ENCODE measurements at regions of chr2 and their contacts with region 1.

Region 1: DNA sequence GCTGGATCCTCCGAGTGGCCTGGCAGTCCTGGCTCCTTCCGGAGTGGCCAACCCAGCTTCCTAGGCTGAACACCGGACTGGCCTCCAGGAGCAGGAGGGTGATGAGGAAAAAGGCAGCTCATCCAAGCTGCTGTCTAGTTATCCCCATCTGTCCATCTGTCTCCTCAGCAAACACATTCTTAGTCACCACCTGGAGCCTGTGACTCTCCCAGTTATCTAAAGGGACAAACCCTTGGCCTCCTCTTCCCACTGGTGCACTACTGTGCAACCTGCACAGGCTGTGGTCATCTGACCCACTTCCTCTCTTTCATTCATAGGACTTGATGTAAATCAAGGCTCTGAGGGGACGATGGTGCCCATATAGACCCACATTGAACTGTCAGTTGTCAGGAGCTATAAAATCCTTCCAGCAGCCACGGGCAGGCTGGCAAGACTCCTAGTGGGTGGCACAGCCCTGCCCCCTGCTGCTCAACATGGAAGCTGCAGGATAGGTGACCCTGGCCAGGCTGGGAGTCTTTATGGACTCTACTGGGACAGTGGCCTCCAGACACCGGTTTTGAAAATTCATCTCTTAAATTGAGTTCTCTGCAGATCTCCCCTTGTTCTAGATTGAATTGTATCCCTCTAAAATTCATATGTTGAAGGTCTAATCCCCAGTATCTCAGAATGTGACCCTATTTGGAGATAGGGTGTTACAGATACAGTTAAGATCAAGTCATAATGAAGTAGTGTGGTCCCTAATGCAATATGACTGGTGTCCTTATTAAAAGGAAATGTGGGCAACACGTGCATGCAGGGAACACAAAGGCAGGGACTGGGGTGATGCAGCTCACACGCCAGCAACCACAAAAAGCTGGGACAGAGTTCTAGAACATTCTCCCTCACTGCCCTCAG is 29.3 kb upstream of the DUSP2 start:
- DNase-seq: peak; percentile 18
- H3K4me3 ChIP-seq: no peak overlapping the region
- H3K27ac ChIP-seq: no peak overlapping the region
- H3K27me3 ChIP-seq: no peaks in the 10 kb centered on the region
- CTCF ChIP-seq: peak; percentile 94

Region 2: GRCh38 chr2:96024336-96025193 is 149.9 kb before region 1 on chr2:
- CTCF ChIA-PET with region 1: interaction called, 34 read pairs
- POLR2A ChIA-PET with region 1: no interaction called
- DNase-seq: no peak
- H3K4me3 ChIP-seq: no peak overlapping the region
- H3K27ac ChIP-seq: no peak overlapping the region
- H3K27me3 ChIP-seq: no peaks in the 10 kb centered on the region
- CTCF ChIP-seq: no peak

Region 3: DNA sequence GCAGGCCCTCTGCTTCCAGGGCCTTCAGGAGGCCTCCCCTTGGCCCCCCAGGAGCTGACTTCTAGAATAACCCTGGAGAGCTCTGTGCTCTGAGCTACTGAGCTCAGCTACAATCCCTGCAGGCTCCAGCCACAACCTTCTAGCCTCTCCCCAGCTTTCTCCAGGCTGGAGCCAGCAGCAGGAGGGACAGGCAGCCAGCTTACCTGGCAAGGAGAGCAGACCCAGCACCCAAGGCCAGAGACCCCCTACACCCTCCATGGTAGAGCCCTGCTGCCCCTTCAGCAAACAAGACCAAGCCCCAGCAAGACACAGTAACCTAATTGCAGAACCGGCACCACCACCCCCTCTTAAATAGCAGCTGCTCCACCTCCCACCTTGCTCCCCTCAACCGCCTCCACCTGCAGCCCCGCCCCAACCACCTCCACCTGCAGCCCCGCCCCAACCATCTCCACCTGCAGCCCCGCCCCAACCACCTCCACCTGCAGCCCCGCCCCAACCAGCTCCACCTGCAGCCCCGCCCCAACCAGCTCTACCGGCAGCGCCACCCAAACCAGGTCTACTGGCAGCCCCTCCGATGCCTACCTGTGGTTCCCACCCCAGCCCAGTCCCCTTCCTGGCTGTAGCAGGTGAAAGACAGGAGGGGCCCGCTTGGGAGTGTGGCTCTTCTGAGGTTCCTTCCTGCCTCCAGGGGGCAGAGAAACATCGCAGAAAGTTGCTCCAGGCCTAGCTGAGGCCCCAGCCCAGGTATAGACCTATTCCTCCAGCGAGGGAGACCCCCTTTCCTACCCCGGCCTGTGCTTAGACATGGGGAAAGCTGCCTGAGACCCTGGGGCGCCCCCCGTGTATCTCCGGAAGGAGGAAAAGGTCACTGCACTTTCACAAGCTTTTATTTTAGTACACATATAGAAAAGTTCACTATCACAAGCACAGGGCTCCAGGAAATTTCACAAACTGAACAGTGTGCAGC is 36.0 kb before region 1 on chr2 and contains the start of gene ASTL:
- CTCF ChIA-PET with region 1: interaction called, 54 read pairs
- POLR2A ChIA-PET with region 1: no interaction called
- DNase-seq: no peak
- H3K4me3 ChIP-seq: no peak within 1 kb of the TSS
- H3K27ac ChIP-seq: no peak within 1 kb of the TSS
- H3K27me3 ChIP-seq: peaks cover 17% of the 10 kb centered on the region
- CTCF ChIP-seq: peak; percentile 73
- polyA plus RNA-seq, gene ASTL: not detected in 2 replicates

Region 4: DNA sequence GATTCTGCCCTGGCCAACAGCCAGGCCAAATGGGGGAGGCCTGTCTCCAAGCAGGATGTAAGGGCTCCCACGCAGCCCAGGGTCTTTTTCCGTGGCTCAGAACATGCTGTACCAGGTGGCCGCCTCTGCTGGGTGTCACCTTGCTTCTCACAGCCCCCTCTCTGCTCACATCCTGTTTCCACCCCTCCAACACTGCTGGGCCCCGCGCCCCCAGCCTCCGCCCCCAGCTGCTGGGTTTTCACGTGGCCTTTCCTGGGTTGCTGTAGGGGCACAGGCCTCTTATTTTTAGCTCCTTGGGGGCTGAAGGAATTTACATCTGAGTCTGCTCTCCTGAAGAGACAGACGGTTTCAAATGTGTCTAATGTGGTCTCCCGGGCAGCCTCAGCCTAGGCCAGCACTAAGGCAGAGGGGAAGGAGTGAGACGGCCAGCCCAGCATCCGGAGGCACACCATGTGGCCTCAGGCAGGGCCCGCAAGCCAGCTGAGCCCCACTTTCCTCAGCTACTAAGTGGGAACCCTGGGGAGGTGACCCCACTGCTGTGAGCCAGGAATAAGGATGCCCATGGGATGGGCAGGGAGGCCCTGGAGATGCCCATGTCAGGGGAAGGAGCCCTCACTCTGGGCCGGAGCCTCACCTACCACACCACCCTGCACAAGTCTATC is 10.6 kb before region 1 on chr2:
- CTCF ChIA-PET with region 1: interaction called, 20 read pairs
- POLR2A ChIA-PET with region 1: no interaction called
- DNase-seq: no peak
- H3K4me3 ChIP-seq: no peak overlapping the region
- H3K27ac ChIP-seq: no peak overlapping the region
- H3K27me3 ChIP-seq: peaks cover 7% of the 10 kb centered on the region
- CTCF ChIP-seq: no peak

Region 5: DNA sequence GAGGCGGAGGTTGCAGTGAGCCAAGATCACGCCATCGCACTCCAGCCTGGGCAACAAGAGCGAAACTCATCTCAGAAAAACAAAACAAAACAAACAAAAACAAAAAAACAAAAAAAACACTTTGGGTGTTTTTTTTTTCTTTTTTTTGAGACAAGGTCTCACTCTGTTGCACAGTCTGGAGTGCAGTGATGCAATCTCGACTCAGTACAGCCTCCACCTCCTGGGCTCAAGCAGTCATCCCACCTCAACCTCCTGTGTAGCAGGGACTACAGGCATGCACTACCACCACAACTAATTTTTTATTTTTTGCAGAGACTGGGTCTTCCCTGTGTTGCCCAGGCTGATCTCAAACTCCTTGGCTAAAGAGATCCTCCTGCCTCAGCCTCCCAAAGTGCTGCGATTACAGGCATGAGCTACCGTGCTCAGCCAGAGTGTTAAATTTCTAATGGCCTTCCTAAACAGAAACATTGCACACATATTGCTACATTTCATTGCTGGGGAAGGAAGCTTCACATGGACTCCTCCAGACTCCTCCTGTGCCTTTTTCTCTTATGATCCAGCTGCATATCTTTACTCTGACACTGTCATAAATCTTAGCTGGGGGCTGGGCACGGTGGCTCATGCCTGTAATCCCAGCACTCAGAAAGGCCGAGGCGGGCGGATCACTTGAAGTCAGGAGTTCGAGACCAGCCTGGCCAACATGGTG is 14.5 kb after region 1 on chr2:
- CTCF ChIA-PET with region 1: interaction called, 27 read pairs
- POLR2A ChIA-PET with region 1: no interaction called
- DNase-seq: no peak
- H3K4me3 ChIP-seq: no peak overlapping the region
- H3K27ac ChIP-seq: no peak overlapping the region
- H3K27me3 ChIP-seq: no peaks in the 10 kb centered on the region
- CTCF ChIP-seq: no peak

Region 6: GRCh38 chr2:96195410-96196066 is 21.0 kb after region 1 on chr2:
- CTCF ChIA-PET with region 1: interaction called, 17 read pairs
- POLR2A ChIA-PET with region 1: no interaction called
- DNase-seq: peak; percentile 73
- H3K4me3 ChIP-seq: no peak overlapping the region
- H3K27ac ChIP-seq: peak overlapping the region; percentile 63
- H3K27me3 ChIP-seq: no peaks in the 10 kb centered on the region
- CTCF ChIP-seq: no peak

Region 7: GRCh38 chr2:96202152-96202854 is 27.8 kb after region 1 on chr2:
- CTCF ChIA-PET with region 1: interaction called, 17 read pairs
- POLR2A ChIA-PET with region 1: no interaction called
- DNase-seq: no peak
- H3K4me3 ChIP-seq: no peak overlapping the region
- H3K27ac ChIP-seq: no peak overlapping the region
- H3K27me3 ChIP-seq: no peaks in the 10 kb centered on the region
- CTCF ChIP-seq: no peak

Region 8: DNA sequence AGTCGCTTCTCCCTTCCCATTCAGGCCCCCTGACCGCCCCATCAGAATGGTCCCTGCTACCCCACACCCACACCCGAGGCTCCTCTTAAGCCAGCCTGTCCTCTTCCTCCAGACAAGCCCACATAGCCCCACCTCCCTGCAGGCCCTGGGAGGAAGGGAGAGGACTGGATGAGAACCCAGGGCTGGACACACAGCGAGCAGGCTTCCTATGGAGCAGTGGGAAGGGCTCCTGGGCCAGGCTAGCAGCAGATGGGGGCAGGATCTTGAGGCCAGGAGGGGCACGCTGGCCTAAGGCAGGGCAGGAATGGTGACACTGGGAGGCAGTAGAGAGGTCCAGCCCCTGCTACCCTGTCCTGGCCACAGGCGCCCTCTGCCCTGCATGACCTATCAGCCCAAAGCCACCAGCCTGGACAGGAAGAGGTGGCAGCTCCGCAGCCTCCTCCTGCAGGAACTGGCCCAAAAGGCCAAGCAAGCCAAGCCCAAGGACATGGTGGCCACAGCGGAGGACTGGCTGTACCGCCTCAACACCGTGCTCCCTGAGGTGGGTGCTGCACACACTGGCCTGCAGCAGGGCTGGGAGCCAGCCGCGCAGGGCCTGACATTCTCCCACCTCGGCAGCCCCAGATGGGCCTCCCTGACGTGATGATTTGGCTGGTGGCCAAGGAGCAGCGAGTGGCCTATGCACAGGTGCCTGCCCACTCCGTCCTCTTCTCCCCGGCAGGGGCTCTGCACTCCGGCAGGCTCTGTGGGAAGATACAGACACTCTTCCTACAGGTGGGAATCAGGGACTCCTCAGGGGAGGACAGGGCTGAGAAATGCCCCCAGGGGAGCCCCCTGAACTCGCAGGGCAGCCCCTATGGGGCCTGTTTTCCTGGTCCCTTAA is 511.3 kb after region 1 on chr2:
- CTCF ChIA-PET with region 1: no interaction called
- POLR2A ChIA-PET with region 1: no interaction called
- DNase-seq: no peak
- H3K4me3 ChIP-seq: no peak overlapping the region
- H3K27ac ChIP-seq: no peak overlapping the region
- H3K27me3 ChIP-seq: peaks cover 13% of the 10 kb centered on the region
- CTCF ChIP-seq: peak; percentile 1; the same call in 1 of the 2 replicates